Right cardiac atrium (tissue), 5 donors: ENCODE measurements at regions of chr7 and their contacts with region 1.

Region 1: GRCh38 chr7:55099066-55099820 is 80.4 kb downstream of the EGFR start:
- DNase-seq: peak; percentile 33 to 81 (median 74)
- ATAC-seq: peak; percentile 41 to 57
- H3K4me3 ChIP-seq: no peak overlapping the region
- H3K27ac ChIP-seq: peak overlapping the region; percentile 65
- H3K4me1 ChIP-seq: peaks cover 19% of the 10 kb centered on the region
- H3K27me3 ChIP-seq: no peaks in the 10 kb centered on the region

Region 2: DNA sequence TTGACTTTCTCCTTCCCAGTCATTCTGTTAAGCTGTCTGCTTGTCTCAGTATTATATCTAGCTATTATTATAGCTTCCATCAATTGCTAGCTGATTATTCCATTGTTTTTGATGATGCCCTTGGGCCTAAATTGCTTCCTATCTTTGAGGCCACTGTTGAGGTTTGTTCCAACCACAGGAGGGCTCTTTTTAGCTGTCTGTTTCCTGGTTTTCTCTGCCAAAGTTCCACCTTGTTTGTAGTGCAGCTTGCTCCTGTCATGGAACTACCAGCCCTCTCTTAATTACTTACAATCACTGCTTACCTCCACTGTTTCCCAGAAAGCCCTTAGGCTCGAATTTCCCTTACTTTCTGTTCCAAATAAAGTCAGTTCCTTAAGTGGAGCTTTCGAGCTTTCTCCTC is 221.6 kb before region 1 on chr7:
- intact Hi-C with region 1: no loop called
- DNase-seq: no peak
- ATAC-seq: no peak
- H3K4me3 ChIP-seq: no peak overlapping the region
- H3K27ac ChIP-seq: no peak overlapping the region
- H3K4me1 ChIP-seq: no peaks in the 10 kb centered on the region
- H3K27me3 ChIP-seq: no peaks in the 10 kb centered on the region

Region 3: DNA sequence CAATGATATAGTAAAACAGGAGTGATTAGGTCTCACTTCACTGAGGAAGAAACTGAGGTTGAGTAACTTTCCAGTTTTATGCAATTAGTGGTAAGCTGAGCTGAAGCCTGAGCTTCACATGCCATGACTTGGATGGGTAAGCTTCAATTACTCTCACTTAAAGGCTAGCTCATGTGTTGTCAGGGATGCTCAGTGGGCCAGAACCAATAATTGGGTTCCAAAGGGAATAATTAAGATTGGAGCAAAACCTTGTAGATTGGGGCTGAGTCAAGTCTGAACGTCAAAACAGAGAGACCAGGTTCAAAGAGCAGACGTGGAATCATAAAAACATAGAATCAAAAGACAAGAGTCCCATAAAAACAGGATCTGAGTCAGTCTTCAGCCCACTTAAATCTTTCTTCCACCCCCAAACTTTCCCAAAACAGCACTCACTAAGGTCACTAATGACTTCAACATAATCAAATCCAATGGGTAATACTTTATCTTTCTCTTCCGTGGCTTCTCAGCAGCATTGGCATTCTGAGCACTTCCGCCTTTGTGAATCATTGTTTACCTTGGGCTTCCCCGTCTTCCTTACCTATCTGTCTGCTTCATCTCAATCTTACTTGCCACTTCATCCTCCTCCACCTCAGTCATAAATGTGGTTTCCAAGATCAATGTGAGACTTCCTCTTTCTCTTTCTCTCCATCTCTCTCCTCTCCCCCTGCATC is 103.5 kb before region 1 on chr7:
- intact Hi-C with region 1: no loop called
- DNase-seq: no peak
- ATAC-seq: no peak
- H3K4me3 ChIP-seq: no peak overlapping the region
- H3K27ac ChIP-seq: no peak overlapping the region
- H3K4me1 ChIP-seq: no peaks in the 10 kb centered on the region
- H3K27me3 ChIP-seq: no peaks in the 10 kb centered on the region

Region 4: GRCh38 chr7:55030314-55030713 is 68.9 kb before region 1 on chr7:
- intact Hi-C with region 1: loop called in 1 of 4 experiments (anchors 10 kb)
- DNase-seq: no peak
- ATAC-seq: no peak
- H3K4me3 ChIP-seq: no peak overlapping the region
- H3K27ac ChIP-seq: no peak overlapping the region
- H3K4me1 ChIP-seq: no peaks in the 10 kb centered on the region
- H3K27me3 ChIP-seq: no peaks in the 10 kb centered on the region